B cell (primary cell): ENCODE measurements at regions of chr7 and their contacts with region 1.

Region 1: GRCh38 chr7:77247206-77247850 is 47.7 kb upstream of the FGL2 start:
- DNase-seq: peak; percentile 88
- ATAC-seq: peak; percentile 98
- H3K4me3 ChIP-seq: no peak overlapping the region
- H3K4me3 Mint-ChIP-seq: no peak overlapping the region
- H3K27ac ChIP-seq: no peak overlapping the region
- H3K27ac Mint-ChIP-seq: no peak overlapping the region
- H3K4me1 ChIP-seq: no peaks in the 10 kb centered on the region
- H3K4me1 Mint-ChIP-seq: no peaks in the 10 kb centered on the region
- H3K27me3 ChIP-seq: no peaks in the 10 kb centered on the region
- H3K27me3 Mint-ChIP-seq: no peaks in the 10 kb centered on the region
- CTCF ChIP-seq: peak; percentile 97

Region 2: GRCh38 chr7:77188731-77189437 is 58.4 kb before region 1 on chr7:
- CTCF ChIA-PET with region 1: interaction called, 15 read pairs
- POLR2A ChIA-PET with region 1: no interaction called
- intact Hi-C with region 1: loop called (anchors 2 kb)
- DNase-seq: no peak
- ATAC-seq: no peak
- H3K4me3 ChIP-seq: no peak overlapping the region
- H3K4me3 Mint-ChIP-seq: no peak overlapping the region
- H3K27ac ChIP-seq: no peak overlapping the region
- H3K27ac Mint-ChIP-seq: no peak overlapping the region
- H3K4me1 ChIP-seq: peaks cover 24 to 25% of the 10 kb centered on the region in 2 donors
- H3K4me1 Mint-ChIP-seq: peaks cover 27% of the 10 kb centered on the region
- H3K27me3 ChIP-seq: no peaks in the 10 kb centered on the region
- H3K27me3 Mint-ChIP-seq: no peaks in the 10 kb centered on the region
- CTCF ChIP-seq: no peak

Region 3: DNA sequence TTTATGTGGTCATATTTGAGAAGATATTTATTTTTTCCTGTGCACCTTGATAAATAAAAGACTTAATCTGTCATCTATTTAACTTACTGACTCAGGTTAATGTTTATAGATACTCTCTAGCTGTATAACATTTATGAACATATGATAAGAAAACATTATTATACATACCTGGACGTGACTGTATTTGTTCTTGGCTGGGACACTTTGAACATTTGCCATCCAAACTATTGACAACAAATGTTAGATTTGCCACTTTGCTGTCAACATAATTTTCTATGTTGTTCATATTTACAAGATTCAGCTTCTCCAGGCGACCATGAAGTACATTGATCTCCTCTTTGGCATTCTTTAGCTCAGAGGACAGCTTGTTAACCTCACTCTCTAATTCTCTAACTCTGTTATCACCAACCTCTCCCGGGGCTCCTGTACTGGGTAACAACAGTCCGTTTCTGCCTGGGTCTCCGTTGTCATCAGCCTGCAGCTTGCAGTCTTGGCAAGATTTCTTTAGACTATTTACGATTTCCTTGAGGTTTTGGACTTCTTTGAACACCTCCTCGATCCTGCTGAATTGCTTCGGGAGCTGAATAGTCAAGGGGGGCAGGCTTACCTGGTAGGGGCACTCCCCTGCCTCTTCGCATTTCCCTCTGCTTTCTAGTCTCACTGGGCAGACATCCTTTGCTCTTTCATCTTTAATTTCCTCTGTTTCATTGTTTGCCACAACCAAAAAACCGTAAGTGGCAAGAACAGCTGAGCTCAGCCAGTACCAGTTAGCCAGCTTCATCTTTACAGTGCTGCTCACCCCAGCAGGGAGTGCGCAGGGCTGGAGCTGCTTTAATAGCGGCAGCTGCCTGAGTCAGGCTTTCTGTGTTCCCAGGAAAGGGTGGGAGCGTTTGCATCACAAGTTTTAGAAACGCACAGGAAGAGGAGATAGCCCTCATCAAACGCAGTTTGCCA is 48.0 kb before region 1 on chr7 and contains the start of gene FGL2:
- CTCF ChIA-PET with region 1: interaction called, 40 read pairs
- POLR2A ChIA-PET with region 1: no interaction called
- intact Hi-C with region 1: no loop called
- DNase-seq: peak; percentile 37
- ATAC-seq: peak; percentile 53
- H3K4me3 ChIP-seq: peak within 1 kb of the TSS; percentile 45 to 85 (median 59)
- H3K4me3 Mint-ChIP-seq: peak within 1 kb of the TSS; percentile 87
- H3K27ac ChIP-seq: peak within 1 kb of the TSS; percentile 66 to 83
- H3K27ac Mint-ChIP-seq: peak within 1 kb of the TSS; percentile 91
- H3K4me1 ChIP-seq: peaks cover 32 to 37% of the 10 kb centered on the region in 2 donors
- H3K4me1 Mint-ChIP-seq: peaks cover 67% of the 10 kb centered on the region
- H3K27me3 ChIP-seq: no peaks in the 10 kb centered on the region
- H3K27me3 Mint-ChIP-seq: no peaks in the 10 kb centered on the region
- CTCF ChIP-seq: no peak
- total RNA-seq, gene FGL2: 6.5 and 7.0 TPM in 2 replicates

Region 4: DNA sequence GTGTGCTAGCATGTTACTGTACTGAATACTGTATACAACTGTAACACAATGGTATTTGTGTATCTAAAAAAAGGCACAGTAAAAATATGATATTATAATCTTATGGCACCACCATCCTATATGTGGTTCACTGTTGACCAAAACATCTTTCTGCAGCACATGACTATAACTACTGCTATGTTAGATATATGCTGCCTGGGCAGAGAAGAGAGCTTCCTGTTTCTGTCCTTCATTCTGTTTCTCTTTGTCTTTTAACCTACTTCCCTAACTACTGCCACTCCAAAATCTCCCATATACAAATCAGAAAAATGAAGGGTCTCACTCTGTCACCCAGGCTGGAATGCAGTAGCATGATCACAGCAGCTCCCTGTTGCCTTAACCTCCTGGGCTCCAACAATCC is 38.9 kb before region 1 on chr7:
- CTCF ChIA-PET with region 1: interaction called, 10 read pairs
- POLR2A ChIA-PET with region 1: no interaction called
- intact Hi-C with region 1: no loop called
- DNase-seq: no peak
- ATAC-seq: no peak
- H3K4me3 ChIP-seq: no peak overlapping the region
- H3K4me3 Mint-ChIP-seq: no peak overlapping the region
- H3K27ac ChIP-seq: no peak overlapping the region
- H3K27ac Mint-ChIP-seq: no peak overlapping the region
- H3K4me1 ChIP-seq: peaks cover 4% of the 10 kb centered on the region in 2 donors
- H3K4me1 Mint-ChIP-seq: peaks cover 7% of the 10 kb centered on the region
- H3K27me3 ChIP-seq: no peaks in the 10 kb centered on the region
- H3K27me3 Mint-ChIP-seq: no peaks in the 10 kb centered on the region
- CTCF ChIP-seq: no peak

Region 5: GRCh38 chr7:77258014-77258413 is 10.7 kb after region 1 on chr7:
- CTCF ChIA-PET with region 1: interaction called, 14 read pairs
- POLR2A ChIA-PET with region 1: no interaction called
- intact Hi-C with region 1: no loop called
- DNase-seq: no peak
- ATAC-seq: no peak
- H3K4me3 ChIP-seq: no peak overlapping the region
- H3K4me3 Mint-ChIP-seq: no peak overlapping the region
- H3K27ac ChIP-seq: no peak overlapping the region
- H3K27ac Mint-ChIP-seq: no peak overlapping the region
- H3K4me1 ChIP-seq: no peaks in the 10 kb centered on the region
- H3K4me1 Mint-ChIP-seq: no peaks in the 10 kb centered on the region
- H3K27me3 ChIP-seq: no peaks in the 10 kb centered on the region
- H3K27me3 Mint-ChIP-seq: no peaks in the 10 kb centered on the region
- CTCF ChIP-seq: no peak

Region 6: GRCh38 chr7:77269360-77270093 is 22.2 kb after region 1 on chr7:
- CTCF ChIA-PET with region 1: interaction called, 28 read pairs
- POLR2A ChIA-PET with region 1: no interaction called
- intact Hi-C with region 1: loop called (anchors 2 kb)
- DNase-seq: peak; percentile 43
- ATAC-seq: peak; percentile 66
- H3K4me3 ChIP-seq: peak overlapping the region in 1 of 5 experiments; percentile 32
- H3K4me3 Mint-ChIP-seq: peak overlapping the region; percentile 72
- H3K27ac ChIP-seq: peak overlapping the region; percentile 25 to 67
- H3K27ac Mint-ChIP-seq: peak overlapping the region; percentile 85
- H3K4me1 ChIP-seq: peaks cover 20 to 24% of the 10 kb centered on the region in 2 donors
- H3K4me1 Mint-ChIP-seq: peaks cover 42% of the 10 kb centered on the region
- H3K27me3 ChIP-seq: no peaks in the 10 kb centered on the region
- H3K27me3 Mint-ChIP-seq: no peaks in the 10 kb centered on the region
- CTCF ChIP-seq: no peak

Region 7: DNA sequence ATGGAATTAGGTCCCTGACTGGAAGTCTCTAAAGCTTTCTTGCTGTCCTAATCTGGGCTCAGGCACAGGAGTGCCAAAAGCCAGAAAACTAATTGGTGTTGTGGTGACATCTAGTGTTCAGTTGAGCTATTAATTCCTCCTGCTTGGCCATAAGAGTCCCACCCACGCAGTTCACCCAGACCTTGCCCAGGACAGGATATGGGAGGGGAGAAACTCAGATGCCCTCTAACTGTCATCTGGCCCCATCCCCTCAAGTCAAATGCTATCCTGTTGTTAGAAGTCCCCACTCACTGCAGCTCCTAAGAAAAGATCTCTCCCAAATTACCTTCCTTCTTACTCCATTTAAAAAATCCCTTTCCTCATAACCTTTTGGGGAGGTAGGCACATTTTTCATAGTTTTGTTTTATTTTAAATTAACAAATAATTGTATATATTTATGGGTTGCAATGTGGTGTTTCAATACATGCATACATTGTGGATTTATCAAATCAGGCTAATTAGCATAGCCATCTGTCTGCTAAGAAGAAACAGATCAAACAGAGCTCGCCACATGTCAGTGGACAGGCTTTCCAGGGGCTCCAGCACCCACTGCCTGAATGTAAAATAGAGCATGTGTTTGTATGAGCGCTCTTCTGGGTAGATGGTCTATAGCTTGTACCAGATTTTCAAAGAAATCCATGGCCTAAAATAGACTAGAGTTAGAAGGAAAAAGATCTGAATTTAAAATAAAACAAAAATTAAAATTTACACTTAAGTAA is 84.8 kb after region 1 on chr7:
- CTCF ChIA-PET with region 1: interaction called, 123 read pairs
- POLR2A ChIA-PET with region 1: interaction called, 3 read pairs
- intact Hi-C with region 1: loop called (anchors 1 kb)
- DNase-seq: peak; percentile 80
- ATAC-seq: peak; percentile 70
- H3K4me3 ChIP-seq: no peak overlapping the region
- H3K4me3 Mint-ChIP-seq: peak overlapping the region; percentile 38
- H3K27ac ChIP-seq: no peak overlapping the region
- H3K27ac Mint-ChIP-seq: peak overlapping the region; percentile 83
- H3K4me1 ChIP-seq: peaks cover 51 to 52% of the 10 kb centered on the region in 2 donors
- H3K4me1 Mint-ChIP-seq: peaks cover 49% of the 10 kb centered on the region
- H3K27me3 ChIP-seq: no peaks in the 10 kb centered on the region
- H3K27me3 Mint-ChIP-seq: no peaks in the 10 kb centered on the region
- CTCF ChIP-seq: peak; percentile 75